Breast epithelium (tissue), 4 donors: ENCODE measurements at regions of chr3 and their contacts with region 1.

Region 1: DNA sequence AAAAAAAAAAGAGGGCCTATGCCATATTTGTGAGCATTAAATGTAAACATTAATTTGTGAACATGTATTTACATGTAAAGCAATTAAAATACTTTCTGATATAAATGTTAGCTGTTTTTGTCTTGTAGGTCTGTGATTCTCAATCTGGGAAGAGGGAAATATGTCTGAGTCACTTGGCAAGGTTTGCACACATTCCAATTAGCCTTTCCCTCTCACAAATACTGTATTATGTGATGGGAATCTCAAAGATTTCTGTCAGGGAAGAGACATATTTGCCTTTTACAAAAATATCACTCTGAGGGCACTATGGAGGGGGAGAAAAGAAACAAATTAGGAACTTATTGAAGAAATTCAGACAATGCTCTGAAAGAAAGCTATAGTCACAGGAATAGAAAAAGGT is 483.6 kb downstream of the GBE1 start:
- DNase-seq: no peak
- H3K4me3 ChIP-seq: no peak overlapping the region
- H3K27ac ChIP-seq: no peak overlapping the region
- H3K4me1 ChIP-seq: no peaks in the 10 kb centered on the region
- H3K27me3 ChIP-seq: no peaks in the 10 kb centered on the region
- CTCF ChIP-seq: no peak
- POLR2A ChIP-seq: no peak

Region 2: GRCh38 chr3:79822076-79822475 is 1455.8 kb before region 1 on chr3:
- intact Hi-C with region 1: no loop called
- DNase-seq: no peak
- H3K4me3 ChIP-seq: no peak overlapping the region
- H3K27ac ChIP-seq: no peak overlapping the region
- H3K4me1 ChIP-seq: no peaks in the 10 kb centered on the region
- H3K27me3 ChIP-seq: no peaks in the 10 kb centered on the region
- CTCF ChIP-seq: no peak
- POLR2A ChIP-seq: no peak

Region 3: DNA sequence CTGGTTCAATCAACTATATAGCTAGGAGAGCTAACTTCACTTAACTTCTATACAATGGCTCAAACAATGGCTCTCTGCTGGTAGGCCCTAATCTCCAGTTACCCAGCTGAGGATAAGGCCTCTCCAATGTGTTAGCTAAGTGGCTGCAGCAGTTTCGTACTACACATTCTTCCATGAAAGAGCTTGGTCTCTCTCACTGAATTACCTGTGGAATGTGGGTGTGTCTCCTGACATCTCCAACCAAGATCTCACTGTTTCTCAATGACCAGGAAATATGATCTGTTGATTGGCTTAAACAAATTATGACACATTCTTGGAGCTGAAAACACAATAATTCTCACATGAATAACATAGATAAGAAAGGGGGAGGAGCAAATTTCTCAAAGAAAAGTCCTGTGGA is 1340.3 kb before region 1 on chr3:
- intact Hi-C with region 1: no loop called
- DNase-seq: no peak
- H3K4me3 ChIP-seq: no peak overlapping the region
- H3K27ac ChIP-seq: no peak overlapping the region
- H3K4me1 ChIP-seq: no peaks in the 10 kb centered on the region
- H3K27me3 ChIP-seq: no peaks in the 10 kb centered on the region
- CTCF ChIP-seq: no peak
- POLR2A ChIP-seq: no peak

Region 4: DNA sequence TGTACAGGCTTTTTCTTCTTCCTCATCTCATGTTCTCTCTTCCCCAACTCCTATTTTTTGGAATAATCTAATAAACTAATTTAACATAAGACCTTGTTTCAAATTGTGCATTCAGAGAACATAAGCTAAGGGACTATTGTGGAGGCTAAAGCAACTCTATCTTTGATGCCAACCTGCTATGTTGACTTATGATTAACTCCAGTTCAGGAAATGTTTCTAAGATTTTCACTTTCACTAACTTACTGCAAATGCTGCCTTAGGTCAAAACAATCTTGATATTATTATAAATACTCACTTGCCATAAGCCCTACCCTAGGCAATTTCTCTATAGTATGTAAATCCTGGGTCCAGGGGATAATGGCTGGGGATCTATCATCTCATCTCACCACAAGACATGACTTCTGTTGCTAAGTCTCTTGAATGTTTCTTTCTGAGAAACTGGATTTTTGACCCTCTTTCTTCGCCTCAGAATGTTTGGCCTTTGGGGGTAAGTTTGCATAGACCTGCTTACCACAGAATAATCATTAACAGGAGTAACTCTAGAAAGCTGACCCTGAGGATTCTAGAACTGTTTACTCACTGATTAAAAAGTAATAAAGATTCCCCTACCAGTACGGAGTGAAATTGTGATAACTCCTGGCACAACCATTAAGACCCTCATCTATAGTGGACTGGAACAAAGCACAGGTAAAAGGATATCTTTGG is 284.5 kb before region 1 on chr3:
- intact Hi-C with region 1: loop called (anchors 5 kb)
- DNase-seq: no peak
- H3K4me3 ChIP-seq: no peak overlapping the region
- H3K27ac ChIP-seq: no peak overlapping the region
- H3K4me1 ChIP-seq: no peaks in the 10 kb centered on the region
- H3K27me3 ChIP-seq: no peaks in the 10 kb centered on the region
- CTCF ChIP-seq: no peak
- POLR2A ChIP-seq: no peak